ENCODE measurements at regions of chr1 and their contacts with region 1.

Region 1: GRCh38 chr1:175373786-175374623 is 181.4 kb upstream of the KIAA0040 start:
- DNase-seq: peak; percentile 38

Region 2: DNA sequence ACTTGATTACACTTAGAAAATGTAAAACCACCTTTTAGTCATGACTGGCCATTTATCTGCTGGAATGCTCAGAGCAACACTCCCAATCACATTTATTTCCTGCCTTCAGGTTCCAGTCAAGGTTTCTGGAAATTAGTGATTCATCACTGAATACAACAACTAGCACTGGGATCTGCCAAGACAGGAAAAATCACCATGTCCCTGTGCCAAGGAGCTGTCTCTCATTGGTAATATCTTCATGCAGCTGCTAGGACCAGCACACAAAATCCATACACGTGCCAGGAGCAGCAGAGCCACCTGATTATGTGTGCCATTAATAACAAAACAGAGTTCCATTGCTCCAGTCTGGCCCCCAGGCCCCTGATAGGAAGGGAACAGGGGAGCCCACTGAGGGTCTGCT is 174.8 kb after region 1 on chr1:
- in situ Hi-C with region 1: no loop called
- DNase-seq: no peak

Region 3: GRCh38 chr1:176073524-176074157 is 699.6 kb after region 1 on chr1:
- in situ Hi-C with region 1: loop called (anchors 25 kb)
- DNase-seq: peak; percentile 62